Activated CD8-positive, alpha-beta T cell treated with anti-CD3 and anti-CD28 coated beads, Interleukin-2, amount 10 ng/mL, durations not matched to agents 7 days and 5 days (primary cell): ENCODE measurements at regions of chr14 and their contacts with region 1.

Region 1: DNA sequence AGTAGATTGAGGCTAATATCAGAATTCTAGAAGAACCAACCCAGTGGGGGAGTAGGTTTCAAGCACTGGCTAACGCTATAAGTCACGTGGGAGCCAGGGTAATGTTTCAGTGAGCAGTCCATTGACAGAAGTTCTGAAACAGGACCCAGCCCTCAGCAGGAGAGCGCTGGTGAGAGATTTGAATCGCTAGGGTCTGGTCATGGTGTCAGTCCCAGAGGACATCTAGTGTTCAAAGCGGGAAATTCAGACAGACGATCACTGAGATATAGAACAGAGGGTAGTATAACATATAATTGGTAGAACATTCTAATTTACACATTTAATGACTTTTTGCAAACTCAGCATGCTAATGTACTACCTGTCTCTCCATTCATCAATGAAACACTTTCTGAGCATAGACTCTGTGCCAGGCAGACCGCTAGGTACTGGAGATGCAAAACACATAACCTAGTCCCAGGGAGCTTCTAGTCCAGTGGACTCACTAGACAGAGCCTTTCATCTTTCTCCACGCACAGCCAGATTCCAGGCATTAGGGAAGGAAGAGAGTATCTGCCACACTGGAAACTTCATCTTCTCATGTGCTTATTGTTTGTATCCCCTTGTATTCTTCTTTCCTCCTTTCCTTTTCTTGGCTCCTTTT is 35.4 kb upstream of the RNASE3 start:
- DNase-seq: peak; percentile 63
- ATAC-seq: peak; percentile 84
- H3K4me3 Mint-ChIP-seq: no peak overlapping the region
- H3K27ac Mint-ChIP-seq: no peak overlapping the region
- H3K4me1 Mint-ChIP-seq: peaks cover 4% of the 10 kb centered on the region
- H3K27me3 Mint-ChIP-seq: peaks cover 23% of the 10 kb centered on the region

Region 2: DNA sequence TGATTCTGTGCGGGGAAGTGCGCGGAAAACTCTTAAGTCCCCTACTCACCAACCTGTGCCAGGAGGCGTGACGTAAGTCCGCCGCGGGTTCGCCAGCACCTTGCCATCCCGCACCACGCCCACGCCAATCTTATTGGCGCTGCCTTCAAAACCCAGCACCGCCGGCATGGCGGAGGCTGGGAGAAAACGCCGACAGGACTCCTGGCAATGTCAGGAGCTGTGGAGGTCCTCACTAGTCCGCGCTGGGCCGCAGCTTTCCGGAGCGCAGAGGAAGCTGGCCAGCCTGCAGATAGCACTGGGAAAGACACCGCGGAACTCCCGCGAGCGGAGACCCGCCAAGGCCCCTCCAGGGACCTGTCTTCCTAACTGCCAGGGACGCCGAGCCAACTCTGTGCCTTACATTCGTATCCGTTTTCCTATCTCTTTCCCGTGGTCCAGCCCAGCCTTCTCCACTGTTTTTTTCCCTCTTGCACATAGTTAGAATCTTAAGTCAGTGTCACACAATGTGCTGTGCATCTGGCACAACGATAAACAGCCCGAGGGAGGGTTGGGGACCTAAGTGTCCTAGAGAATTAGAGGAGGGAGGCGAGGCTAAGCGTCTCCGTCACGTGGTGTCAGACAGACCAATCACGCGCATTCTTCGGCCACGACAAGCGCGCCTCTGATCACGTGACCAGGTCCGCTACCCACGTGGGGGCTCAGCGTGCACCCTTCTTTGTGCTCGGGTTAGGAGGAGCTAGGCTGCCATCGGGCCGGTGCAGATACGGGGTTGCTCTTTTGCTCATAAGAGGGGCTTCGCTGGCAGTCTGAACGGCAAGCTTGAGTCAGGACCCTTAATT is 401.0 kb before region 1 on chr14 and contains the starts of genes APEX1 and OSGEP:
- CTCF ChIA-PET with region 1: no interaction called
- POLR2A ChIA-PET with region 1: no interaction called
- DNase-seq: peak; percentile 99
- ATAC-seq: peak; percentile 90
- H3K4me3 Mint-ChIP-seq: peak within 1 kb of the TSS; percentile 36
- H3K27ac Mint-ChIP-seq: no peak within 1 kb of the TSS
- H3K4me1 Mint-ChIP-seq: peaks cover 24% of the 10 kb centered on the region
- H3K27me3 Mint-ChIP-seq: no peaks in the 10 kb centered on the region
- total RNA-seq, gene APEX1: 135 to 142 TPM
- total RNA-seq, gene OSGEP: 51.8 to 56.6 TPM

Region 3: GRCh38 chr14:20690848-20691523 is 164.8 kb before region 1 on chr14:
- CTCF ChIA-PET with region 1: interaction called, 56 read pairs
- POLR2A ChIA-PET with region 1: interaction called, 3 read pairs
- DNase-seq: peak; percentile 61
- ATAC-seq: peak; percentile 81
- H3K4me3 Mint-ChIP-seq: no peak overlapping the region
- H3K27ac Mint-ChIP-seq: no peak overlapping the region
- H3K4me1 Mint-ChIP-seq: peaks cover 11% of the 10 kb centered on the region
- H3K27me3 Mint-ChIP-seq: no peaks in the 10 kb centered on the region

Region 4: GRCh38 chr14:20697273-20698017 is 158.3 kb before region 1 on chr14:
- CTCF ChIA-PET with region 1: interaction called, 56 read pairs
- POLR2A ChIA-PET with region 1: no interaction called
- DNase-seq: peak; percentile 72
- ATAC-seq: peak; percentile 75
- H3K4me3 Mint-ChIP-seq: no peak overlapping the region
- H3K27ac Mint-ChIP-seq: no peak overlapping the region
- H3K4me1 Mint-ChIP-seq: no peaks in the 10 kb centered on the region
- H3K27me3 Mint-ChIP-seq: peaks cover 8% of the 10 kb centered on the region

Region 5: GRCh38 chr14:20866963-20867362 is 11.2 kb after region 1 on chr14:
- CTCF ChIA-PET with region 1: interaction called, 37 read pairs
- POLR2A ChIA-PET with region 1: no interaction called
- DNase-seq: no peak
- ATAC-seq: no peak
- H3K4me3 Mint-ChIP-seq: no peak overlapping the region
- H3K27ac Mint-ChIP-seq: no peak overlapping the region
- H3K4me1 Mint-ChIP-seq: no peaks in the 10 kb centered on the region
- H3K27me3 Mint-ChIP-seq: peaks cover 41% of the 10 kb centered on the region

Region 6: GRCh38 chr14:20873370-20874177 is 17.8 kb after region 1 on chr14:
- CTCF ChIA-PET with region 1: interaction called, 37 read pairs
- POLR2A ChIA-PET with region 1: no interaction called
- DNase-seq: peak; percentile 88
- ATAC-seq: peak; percentile 94
- H3K4me3 Mint-ChIP-seq: peak overlapping the region; percentile 3
- H3K27ac Mint-ChIP-seq: no peak overlapping the region
- H3K4me1 Mint-ChIP-seq: peaks cover 22% of the 10 kb centered on the region
- H3K27me3 Mint-ChIP-seq: peaks cover 24% of the 10 kb centered on the region

Region 7: DNA sequence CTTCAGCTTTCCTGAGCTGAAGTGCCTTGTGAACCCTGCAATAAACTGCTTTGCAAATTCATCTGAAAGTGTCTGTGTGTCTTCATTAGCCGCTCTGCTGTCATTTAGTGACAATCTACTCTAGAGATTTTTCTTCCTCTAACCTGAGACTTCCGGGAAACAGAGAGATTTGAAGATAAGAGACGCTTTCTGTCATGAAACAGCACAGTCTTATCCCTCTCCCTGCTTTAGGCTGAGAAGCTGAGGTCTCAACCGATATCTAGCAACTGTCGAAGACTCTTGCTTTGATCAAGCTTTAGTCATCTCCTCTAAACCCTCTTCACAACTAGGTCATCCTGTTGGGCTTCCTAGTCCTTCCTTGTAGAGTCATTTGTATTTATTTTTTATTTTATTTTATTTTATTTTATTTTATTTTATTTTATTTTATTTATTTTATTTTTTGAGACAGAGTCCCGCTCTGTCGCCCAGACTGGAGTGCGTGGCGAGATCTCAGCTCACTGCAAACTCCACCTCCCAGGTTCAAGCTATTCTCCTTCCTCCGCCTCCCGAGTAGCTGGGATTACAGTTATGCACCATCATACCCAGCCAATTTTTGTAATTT is 100.7 kb after region 1 on chr14:
- CTCF ChIA-PET with region 1: interaction called, 34 read pairs
- POLR2A ChIA-PET with region 1: no interaction called
- DNase-seq: no peak
- ATAC-seq: no peak
- H3K4me3 Mint-ChIP-seq: no peak overlapping the region
- H3K27ac Mint-ChIP-seq: peak overlapping the region; percentile 13
- H3K4me1 Mint-ChIP-seq: peaks cover 27% of the 10 kb centered on the region
- H3K27me3 Mint-ChIP-seq: peaks cover 23% of the 10 kb centered on the region